ENCODE measurements at regions of chr9 and their contacts with region 1.

Region 1: GRCh38 chr9:77475641-77476473 is 172.3 kb downstream of the GNA14 start:
- DNase-seq: peak; percentile 54
- H3K4me3 Mint-ChIP-seq: peak overlapping the region; percentile 37
- H3K27ac Mint-ChIP-seq: peak overlapping the region; percentile 86
- H3K4me1 Mint-ChIP-seq: peaks cover 38% of the 10 kb centered on the region
- H3K27me3 Mint-ChIP-seq: no peaks in the 10 kb centered on the region

Region 2: DNA sequence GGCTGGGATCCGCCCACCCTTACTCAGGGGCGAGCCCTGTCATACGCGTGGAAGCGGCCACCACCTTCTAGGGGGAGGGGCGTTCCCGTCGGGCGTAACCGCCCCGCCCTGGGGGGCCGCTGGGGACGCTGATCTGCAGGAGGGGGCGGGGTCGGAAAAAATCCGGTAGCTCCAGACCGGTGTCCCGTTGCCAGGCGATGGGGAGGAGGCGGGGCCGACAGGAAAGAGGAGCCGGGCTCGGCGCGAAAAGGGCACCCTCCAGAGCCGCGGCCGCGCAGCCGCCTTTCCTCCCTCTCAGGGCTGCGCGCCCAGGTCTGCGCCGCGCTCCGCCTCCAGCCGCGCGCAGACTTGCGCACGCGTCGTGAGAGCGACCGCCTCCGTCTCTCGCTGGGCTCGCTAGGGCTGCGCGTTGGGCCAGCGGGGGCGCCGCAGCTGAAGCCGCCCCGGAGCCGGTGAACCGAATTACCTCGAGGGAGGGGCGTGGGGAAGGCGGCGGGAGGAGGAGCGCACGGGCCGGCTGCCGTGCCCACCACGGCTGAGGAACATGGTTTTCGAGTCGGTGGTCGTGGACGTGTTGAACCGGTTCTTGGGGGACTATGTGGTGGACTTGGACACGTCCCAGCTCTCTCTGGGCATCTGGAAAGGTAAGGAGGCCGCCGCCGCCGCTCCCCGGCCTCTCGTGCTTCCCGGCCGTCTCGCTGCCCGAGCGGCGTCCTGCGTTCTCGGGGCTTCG is 298.5 kb before region 1 on chr9 and contains the start of gene VPS13A:
- intact Hi-C with region 1: loop called (anchors 5 kb)
- DNase-seq: peak; percentile 88
- H3K4me3 Mint-ChIP-seq: peak within 1 kb of the TSS; percentile 95
- H3K27ac Mint-ChIP-seq: peak within 1 kb of the TSS; percentile 92
- H3K4me1 Mint-ChIP-seq: peaks cover 32% of the 10 kb centered on the region
- H3K27me3 Mint-ChIP-seq: peaks cover 13% of the 10 kb centered on the region
- total RNA-seq, gene VPS13A: 43.7 and 44.2 TPM in 2 replicates

Region 3: GRCh38 chr9:77488439-77489126 is 12.7 kb after region 1 on chr9:
- intact Hi-C with region 1: loop called (anchors 1 kb)
- DNase-seq: no peak
- H3K4me3 Mint-ChIP-seq: peak overlapping the region; percentile 82
- H3K27ac Mint-ChIP-seq: no peak overlapping the region
- H3K4me1 Mint-ChIP-seq: peaks cover 29% of the 10 kb centered on the region
- H3K27me3 Mint-ChIP-seq: peaks cover 1% of the 10 kb centered on the region

Region 4: DNA sequence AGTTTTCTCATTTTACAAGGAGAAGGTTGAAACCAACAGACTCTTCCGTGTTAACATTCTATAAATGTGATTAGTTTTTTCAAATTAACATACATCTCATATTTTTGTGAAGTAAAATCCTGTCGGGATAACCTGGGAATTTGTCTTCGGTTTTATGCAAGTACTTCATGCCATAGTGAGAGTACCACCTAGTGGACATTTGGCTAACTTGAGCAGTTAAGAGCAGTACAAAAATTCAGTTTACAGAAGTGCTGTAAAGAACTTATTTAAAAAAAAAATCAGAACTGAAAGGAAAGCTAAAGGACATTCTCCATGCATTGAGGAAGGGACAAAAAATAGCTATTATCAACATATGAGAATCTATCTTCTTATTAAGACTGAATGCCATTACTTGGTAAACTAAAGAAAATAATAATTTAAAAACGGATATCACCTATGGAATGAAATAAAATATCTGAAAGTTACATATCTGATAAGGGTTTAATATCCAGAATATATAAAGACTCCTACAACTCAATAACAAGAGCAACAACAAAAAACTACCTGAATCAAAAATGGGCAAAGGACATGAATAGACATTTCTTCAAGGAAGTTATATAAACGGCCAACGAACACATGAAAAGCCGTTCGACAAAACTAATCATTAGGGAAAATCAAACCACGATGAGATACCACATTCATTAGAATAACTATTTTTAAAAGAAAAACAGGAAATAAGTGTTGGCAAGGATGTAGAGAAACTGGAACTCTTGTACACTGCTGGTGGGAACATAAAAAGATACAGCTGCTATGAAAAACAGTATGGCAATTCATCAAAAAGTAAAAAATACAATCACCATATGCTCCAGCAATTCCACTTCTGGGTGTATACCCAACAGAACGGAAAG is 289.3 kb after region 1 on chr9:
- intact Hi-C with region 1: loop called (anchors 5 kb)
- DNase-seq: no peak
- H3K4me3 Mint-ChIP-seq: no peak overlapping the region
- H3K27ac Mint-ChIP-seq: no peak overlapping the region
- H3K4me1 Mint-ChIP-seq: peaks cover 13% of the 10 kb centered on the region
- H3K27me3 Mint-ChIP-seq: no peaks in the 10 kb centered on the region

Region 5: DNA sequence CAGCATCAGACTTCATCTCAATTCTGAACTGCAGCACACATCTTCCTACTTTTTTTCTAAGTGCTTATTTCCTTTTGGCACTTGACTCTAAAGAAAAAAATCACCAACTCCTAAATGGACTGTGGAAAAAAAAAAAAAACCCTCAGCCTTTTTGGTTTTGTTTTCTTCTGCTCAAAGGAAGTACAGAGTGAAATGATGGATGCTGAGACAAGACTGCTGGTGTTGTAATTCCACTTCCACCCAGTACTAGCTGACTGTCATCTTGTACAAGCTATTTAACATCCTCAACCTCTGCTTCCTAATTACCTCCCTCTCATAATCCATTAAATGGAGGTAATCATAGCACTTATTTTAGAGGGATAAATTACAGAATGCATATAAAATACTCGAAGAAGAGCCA is 343.8 kb after region 1 on chr9:
- intact Hi-C with region 1: loop called (anchors 5 kb)
- DNase-seq: no peak
- H3K4me3 Mint-ChIP-seq: no peak overlapping the region
- H3K27ac Mint-ChIP-seq: no peak overlapping the region
- H3K4me1 Mint-ChIP-seq: peaks cover 39% of the 10 kb centered on the region
- H3K27me3 Mint-ChIP-seq: no peaks in the 10 kb centered on the region

Region 6: DNA sequence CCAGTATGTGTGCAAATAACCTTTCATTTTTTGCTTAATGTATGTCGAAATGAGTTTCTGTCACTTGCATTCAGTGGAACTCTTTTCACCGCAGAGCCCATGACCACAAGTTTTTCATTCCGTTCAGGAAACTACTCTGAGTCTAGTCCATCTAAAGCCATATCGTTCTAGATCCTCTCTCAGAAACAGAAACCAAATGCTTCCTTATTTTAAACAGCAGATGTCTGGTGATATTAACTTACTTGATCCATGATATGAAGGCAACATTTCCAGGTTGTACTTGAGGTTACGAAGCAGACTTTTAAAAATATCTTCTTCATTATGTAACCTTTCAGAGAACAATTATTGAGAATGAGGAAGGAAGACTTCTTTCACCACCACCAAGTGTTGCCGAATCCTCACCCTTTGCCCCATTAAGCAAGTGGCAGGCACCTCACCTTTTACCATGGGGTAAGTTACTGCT is 628.1 kb after region 1 on chr9:
- intact Hi-C with region 1: loop called (anchors 5 kb)
- DNase-seq: peak; percentile 45
- H3K4me3 Mint-ChIP-seq: peak overlapping the region; percentile 11
- H3K27ac Mint-ChIP-seq: peak overlapping the region; percentile 25
- H3K4me1 Mint-ChIP-seq: peaks cover 45% of the 10 kb centered on the region
- H3K27me3 Mint-ChIP-seq: peaks cover 2% of the 10 kb centered on the region

Measured in activated T-helper 1 cell treated with anti-CD3 and anti-CD28 coated beads, Interleukin-12 subunit alpha, Interleukin-12 subunit beta, Interleukin-2, Interleukin-4 antibody, amounts not matched to agents 30 ng/mL and 10 ng/mL and 1 ng/mL, durations not matched to agents 14 hours and 24 hours and 36 hours (primary cell).